ENCODE measurements at regions of chr2 and their contacts with region 1.

Region 1: GRCh38 chr2:196076778-196077568 is 8.3 kb upstream of the DNAH7 start:
- DNase-seq: no peak
- ATAC-seq: peak; percentile 46
- H3K4me3 ChIP-seq: no peak overlapping the region
- H3K27ac ChIP-seq: no peak overlapping the region
- H3K4me1 ChIP-seq: no peaks in the 10 kb centered on the region
- H3K27me3 ChIP-seq: no peaks in the 10 kb centered on the region
- CTCF ChIP-seq: no peak
- EP300 ChIP-seq: no peak
- POLR2A ChIP-seq: no peak
- RAD21 ChIP-seq: no peak

Region 2: DNA sequence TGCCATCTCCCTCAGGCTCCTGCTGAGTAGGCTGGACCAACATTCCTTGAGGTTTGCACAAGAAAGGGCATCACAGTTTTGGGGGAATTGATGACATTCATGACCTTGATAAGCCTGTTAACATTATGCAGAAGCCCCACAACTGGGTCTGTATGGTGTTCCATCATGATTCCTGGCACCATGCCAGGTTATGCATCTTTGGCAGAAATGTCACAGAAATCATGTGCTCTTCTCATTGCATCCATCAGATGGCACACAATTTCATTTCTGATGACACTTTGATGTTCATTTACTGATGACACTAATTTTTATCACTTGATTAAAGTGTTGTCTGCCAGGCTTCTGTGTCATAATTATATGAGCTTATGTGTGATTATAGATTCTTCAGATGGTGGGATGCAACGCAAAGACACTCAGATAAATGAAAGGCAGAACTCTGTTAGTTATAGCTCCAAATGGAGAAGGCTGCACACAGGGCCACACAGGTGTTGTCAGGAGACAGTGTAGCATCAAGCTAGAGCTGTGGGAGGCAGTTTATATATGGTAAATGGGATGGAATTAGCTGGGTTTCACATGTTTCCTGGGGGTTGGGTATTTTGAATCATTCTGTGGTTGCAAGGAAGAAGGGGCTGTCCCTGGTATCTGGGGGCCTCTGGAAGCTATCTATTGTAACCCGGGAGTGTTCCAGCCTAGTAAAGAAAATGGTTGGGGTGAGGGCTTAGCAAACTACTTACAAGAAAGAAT is 228.6 kb before region 1 on chr2:
- CTCF ChIA-PET with region 1: no interaction called
- POLR2A ChIA-PET with region 1: no interaction called
- in situ Hi-C with region 1: no loop called
- intact Hi-C with region 1: no loop called
- DNase-seq: peak in 1 of 4 experiments; percentile 8
- ATAC-seq: no peak
- H3K4me3 ChIP-seq: no peak overlapping the region
- H3K27ac ChIP-seq: no peak overlapping the region
- H3K4me1 ChIP-seq: no peaks in the 10 kb centered on the region
- H3K27me3 ChIP-seq: no peaks in the 10 kb centered on the region
- CTCF ChIP-seq: no peak
- EP300 ChIP-seq: no peak
- POLR2A ChIP-seq: no peak
- RAD21 ChIP-seq: no peak

Region 3: GRCh38 chr2:196123679-196124373 is 46.9 kb after region 1 on chr2:
- CTCF ChIA-PET with region 1: no interaction called
- POLR2A ChIA-PET with region 1: no interaction called
- in situ Hi-C with region 1: loop called (anchors 5 kb)
- intact Hi-C with region 1: no loop called
- DNase-seq: peak; percentile 55 to 79 (median 66)
- ATAC-seq: peak; percentile 79
- H3K4me3 ChIP-seq: no peak overlapping the region; the same call in 1 of the 2 replicates
- H3K27ac ChIP-seq: peak overlapping the region; percentile 65; the same call in 2 of the 3 replicates
- H3K4me1 ChIP-seq: peaks cover 6 to 23% of the 10 kb centered on the region in 2 experiments; a peak in 3 of 5 replicates
- H3K27me3 ChIP-seq: no peaks in the 10 kb centered on the region
- CTCF ChIP-seq: no peak
- EP300 ChIP-seq: peak; percentile 76
- POLR2A ChIP-seq: no peak
- RAD21 ChIP-seq: no peak

Region 4: GRCh38 chr2:196277002-196277401 is 200.0 kb after region 1 on chr2:
- CTCF ChIA-PET with region 1: no interaction called
- POLR2A ChIA-PET with region 1: no interaction called
- in situ Hi-C with region 1: no loop called
- intact Hi-C with region 1: loop called (anchors 2 kb)
- DNase-seq: peak; percentile 15 to 29 (median 23)
- ATAC-seq: peak; percentile 60; the same call in 2 of the 3 replicates
- H3K4me3 ChIP-seq: no peak overlapping the region
- H3K27ac ChIP-seq: no peak overlapping the region
- H3K4me1 ChIP-seq: peaks cover 0 to 7% of the 10 kb centered on the region in 2 experiments; a peak in 2 of 5 replicates
- H3K27me3 ChIP-seq: no peaks in the 10 kb centered on the region
- CTCF ChIP-seq: peak; percentile 28 to 56 (median 38); a peak in 4 of 6 replicates
- EP300 ChIP-seq: no peak
- POLR2A ChIP-seq: no peak
- RAD21 ChIP-seq: peak; percentile 66 to 72

Region 5: GRCh38 chr2:196337208-196337953 is 260.4 kb after region 1 on chr2:
- CTCF ChIA-PET with region 1: interaction called, 11 read pairs
- POLR2A ChIA-PET with region 1: no interaction called
- in situ Hi-C with region 1: no loop called
- intact Hi-C with region 1: loop called (anchors 2 kb)
- DNase-seq: peak; percentile 31 to 46 (median 41)
- ATAC-seq: peak; percentile 84
- H3K4me3 ChIP-seq: no peak overlapping the region
- H3K27ac ChIP-seq: no peak overlapping the region
- H3K4me1 ChIP-seq: no peaks in the 10 kb centered on the region
- H3K27me3 ChIP-seq: no peaks in the 10 kb centered on the region
- CTCF ChIP-seq: peak; percentile 31 to 52 (median 48); a peak in 3 of 6 replicates
- EP300 ChIP-seq: no peak
- POLR2A ChIP-seq: no peak
- RAD21 ChIP-seq: peak in 1 of 2 experiments; percentile 61; a peak in 2 of 4 replicates

Region 6: DNA sequence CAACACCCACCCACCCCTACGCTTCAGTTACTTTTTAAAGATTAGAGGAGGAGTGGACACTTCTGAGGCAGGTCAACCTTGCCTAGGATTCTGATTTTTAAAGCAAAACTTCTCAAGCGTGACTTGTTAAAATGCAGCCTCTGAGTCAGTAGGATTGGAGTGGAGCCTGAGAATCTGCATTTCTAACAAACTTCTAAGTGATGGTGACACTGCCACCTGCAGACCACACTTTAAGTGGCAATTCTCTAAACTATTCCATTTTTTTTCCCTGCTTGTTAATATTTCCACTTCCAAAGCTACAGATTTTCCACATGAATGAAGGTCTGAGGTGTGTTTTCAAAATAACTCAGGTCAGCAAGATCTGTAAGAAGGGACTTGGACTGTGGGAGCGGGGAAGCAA is 391.4 kb after region 1 on chr2:
- CTCF ChIA-PET with region 1: no interaction called
- POLR2A ChIA-PET with region 1: no interaction called
- in situ Hi-C with region 1: no loop called
- intact Hi-C with region 1: loop called (anchors 5 kb)
- DNase-seq: peak in 2 of 4 experiments; percentile 6 to 23
- ATAC-seq: 0 out of 3 replicates have a peak, but pooled peaks have one; percentile 40
- H3K4me3 ChIP-seq: no peak overlapping the region
- H3K27ac ChIP-seq: no peak overlapping the region
- H3K4me1 ChIP-seq: no peaks in the 10 kb centered on the region
- H3K27me3 ChIP-seq: no peaks in the 10 kb centered on the region
- CTCF ChIP-seq: peak; percentile 21 to 44 (median 44); a peak in 4 of 6 replicates
- EP300 ChIP-seq: no peak
- POLR2A ChIP-seq: no peak
- RAD21 ChIP-seq: peak in 1 of 2 experiments; percentile 74; a peak in 3 of 4 replicates